Transverse colon (tissue), 4 donors: ENCODE measurements at regions of chr1 and their contacts with region 1.

Region 1: DNA sequence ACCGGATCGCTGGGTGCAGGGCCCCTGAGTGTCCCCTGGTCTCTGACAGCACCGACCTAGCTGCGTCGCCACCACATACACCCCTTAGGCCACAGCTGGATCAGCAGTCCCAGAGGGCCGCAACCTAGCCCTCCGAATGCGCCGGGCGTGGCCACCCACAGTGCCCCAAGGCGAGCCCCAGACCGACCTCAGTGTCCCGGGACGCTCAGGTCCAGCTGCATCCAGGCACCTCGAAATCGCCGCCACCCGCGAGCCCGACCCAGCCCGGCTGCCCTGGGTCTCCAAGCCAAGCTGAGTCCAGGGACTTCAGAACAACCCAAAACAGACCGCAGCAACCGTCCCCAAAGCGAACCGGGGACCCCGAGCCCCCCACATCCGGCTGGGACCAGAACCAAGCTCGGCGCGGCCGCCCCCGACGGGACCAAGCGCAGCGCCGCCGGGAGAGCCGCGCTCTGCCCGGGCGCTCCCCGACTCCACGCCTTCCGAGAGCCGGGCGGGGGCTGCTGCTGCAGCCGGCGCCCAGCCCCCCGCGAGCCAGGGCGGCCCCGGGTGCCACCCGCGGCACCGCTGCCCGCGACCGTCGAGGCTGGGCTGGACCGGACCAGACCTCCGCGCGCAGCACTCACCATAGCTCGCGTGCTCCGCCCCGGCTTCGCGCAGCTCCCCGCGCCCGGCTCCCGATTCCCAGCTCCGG is 54.6 kb upstream of the ECE1 start:
- DNase-seq: no peak
- H3K4me3 ChIP-seq: peak overlapping the region; percentile 75 to 96 (median 77)
- H3K27ac ChIP-seq: peak overlapping the region; percentile 85 to 98 (median 91)
- H3K4me1 ChIP-seq: peaks cover 33 to 53% (median 49%) of the 10 kb centered on the region in 4 donors
- H3K27me3 ChIP-seq: no peaks in the 10 kb centered on the region
- CTCF ChIP-seq: no peak
- EP300 ChIP-seq: no peak
- POLR2A ChIP-seq: peak; percentile 66

Region 2: DNA sequence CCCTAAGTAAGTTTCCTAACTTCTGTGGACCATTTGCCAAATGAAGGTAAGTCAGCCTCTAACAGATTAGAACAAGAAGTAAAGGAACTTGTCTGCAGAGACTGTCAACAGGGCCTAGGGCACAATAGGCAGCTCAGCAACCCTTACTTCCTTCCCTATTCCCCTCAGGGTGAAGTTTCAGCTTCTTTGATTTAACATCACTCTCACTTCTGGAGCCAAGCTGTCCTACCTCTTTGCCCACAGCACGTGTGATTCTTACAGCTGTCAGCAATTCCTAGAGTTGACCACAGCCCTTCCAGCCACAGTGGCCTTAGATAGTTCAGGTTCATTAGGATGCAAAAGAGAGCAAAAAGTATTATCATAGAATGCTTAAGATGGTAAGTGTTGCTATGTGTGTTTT is 160.6 kb before region 1 on chr1:
- in situ Hi-C with region 1: no loop called
- intact Hi-C with region 1: no loop called
- DNase-seq: no peak
- H3K4me3 ChIP-seq: no peak overlapping the region
- H3K27ac ChIP-seq: no peak overlapping the region
- H3K4me1 ChIP-seq: peaks cover 0 to 2% (median 1%) of the 10 kb centered on the region in 4 donors
- H3K27me3 ChIP-seq: no peaks in the 10 kb centered on the region
- CTCF ChIP-seq: no peak
- EP300 ChIP-seq: no peak
- POLR2A ChIP-seq: no peak

Region 3: GRCh38 chr1:21255278-21255942 is 89.5 kb before region 1 on chr1:
- in situ Hi-C with region 1: no loop called
- intact Hi-C with region 1: loop called (anchors 5 kb)
- DNase-seq: peak; percentile 90
- H3K4me3 ChIP-seq: no peak overlapping the region
- H3K27ac ChIP-seq: peak overlapping the region; percentile 49 to 88 (median 84)
- H3K4me1 ChIP-seq: peaks cover 12 to 43% (median 25%) of the 10 kb centered on the region in 4 donors
- H3K27me3 ChIP-seq: no peaks in the 10 kb centered on the region
- CTCF ChIP-seq: peak; percentile 78 to 86 (median 80)
- EP300 ChIP-seq: no peak
- POLR2A ChIP-seq: no peak

Region 4: GRCh38 chr1:21308847-21309652 is 35.8 kb before region 1 on chr1:
- in situ Hi-C with region 1: no loop called
- intact Hi-C with region 1: loop called (anchors 5 kb)
- DNase-seq: peak; percentile 59
- H3K4me3 ChIP-seq: no peak overlapping the region
- H3K27ac ChIP-seq: peak overlapping the region; percentile 51 to 90 (median 72)
- H3K4me1 ChIP-seq: peaks cover 22 to 59% (median 30%) of the 10 kb centered on the region in 4 donors
- H3K27me3 ChIP-seq: no peaks in the 10 kb centered on the region
- CTCF ChIP-seq: no peak
- EP300 ChIP-seq: peak; percentile 62
- POLR2A ChIP-seq: no peak